ENCODE measurements at regions of chr10 and their contacts with region 1.

Region 1: GRCh38 chr10:34584164-34584563 is 230.9 kb downstream of the PARD3 start:
- DNase-seq: peak; percentile 81
- H3K4me3 Mint-ChIP-seq: peak overlapping the region; percentile 60
- H3K27ac Mint-ChIP-seq: peak overlapping the region; percentile 88
- H3K4me1 Mint-ChIP-seq: peaks cover 57% of the 10 kb centered on the region
- H3K27me3 Mint-ChIP-seq: no peaks in the 10 kb centered on the region
- CTCF ChIP-seq: no peak

Region 2: DNA sequence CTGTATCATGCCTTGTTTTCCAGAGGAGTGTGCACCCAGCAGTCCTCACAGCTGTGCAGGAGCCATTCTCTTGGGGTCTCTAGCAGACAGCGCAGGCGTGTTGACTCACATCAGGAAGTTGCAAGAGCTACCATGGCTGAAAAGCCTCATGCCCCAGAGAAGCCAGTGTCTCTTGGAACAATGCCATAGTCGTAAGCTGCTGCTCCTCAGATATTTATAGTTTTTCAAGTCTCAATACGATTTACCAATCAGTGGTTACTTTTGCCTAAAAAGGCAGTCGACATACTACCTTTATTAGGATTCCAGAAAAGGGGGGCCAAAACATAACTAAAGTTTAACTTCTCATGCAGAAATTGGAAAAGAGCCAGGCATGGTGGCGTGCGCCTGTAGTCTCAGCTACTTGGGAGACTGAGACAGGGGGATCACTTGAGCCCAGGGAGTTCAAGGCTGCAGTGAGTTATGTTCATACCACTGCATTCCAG is 176.8 kb before region 1 on chr10:
- CTCF ChIA-PET with region 1: no interaction called
- POLR2A ChIA-PET with region 1: no interaction called
- intact Hi-C with region 1: no loop called
- DNase-seq: peak; percentile 62
- H3K4me3 Mint-ChIP-seq: no peak overlapping the region
- H3K27ac Mint-ChIP-seq: no peak overlapping the region
- H3K4me1 Mint-ChIP-seq: peaks cover 20% of the 10 kb centered on the region
- H3K27me3 Mint-ChIP-seq: no peaks in the 10 kb centered on the region
- CTCF ChIP-seq: no peak

Region 3: DNA sequence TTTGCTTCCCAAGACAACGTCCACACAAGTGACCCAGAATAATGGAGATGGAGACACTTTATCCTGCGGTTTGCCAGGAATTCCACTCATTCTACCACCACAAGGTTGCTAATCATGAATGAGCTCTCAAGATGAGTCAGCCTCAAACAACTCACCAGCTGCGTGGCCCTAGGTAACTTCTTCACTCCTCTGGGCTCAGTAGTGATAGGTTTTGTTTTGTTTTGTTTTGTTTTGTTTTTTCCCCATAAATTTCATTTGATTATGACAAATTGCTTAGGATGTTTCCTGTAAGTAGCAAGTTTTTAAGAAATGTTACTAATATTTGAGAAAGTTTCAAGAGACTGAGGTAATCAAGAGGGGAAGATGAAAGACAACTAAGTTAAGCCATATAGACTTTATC is 55.8 kb before region 1 on chr10:
- CTCF ChIA-PET with region 1: no interaction called
- POLR2A ChIA-PET with region 1: no interaction called
- intact Hi-C with region 1: loop called (anchors 5 kb)
- DNase-seq: peak; percentile 94
- H3K4me3 Mint-ChIP-seq: peak overlapping the region; percentile 72
- H3K27ac Mint-ChIP-seq: peak overlapping the region; percentile 88
- H3K4me1 Mint-ChIP-seq: peaks cover 43% of the 10 kb centered on the region
- H3K27me3 Mint-ChIP-seq: no peaks in the 10 kb centered on the region
- CTCF ChIP-seq: no peak

Region 4: DNA sequence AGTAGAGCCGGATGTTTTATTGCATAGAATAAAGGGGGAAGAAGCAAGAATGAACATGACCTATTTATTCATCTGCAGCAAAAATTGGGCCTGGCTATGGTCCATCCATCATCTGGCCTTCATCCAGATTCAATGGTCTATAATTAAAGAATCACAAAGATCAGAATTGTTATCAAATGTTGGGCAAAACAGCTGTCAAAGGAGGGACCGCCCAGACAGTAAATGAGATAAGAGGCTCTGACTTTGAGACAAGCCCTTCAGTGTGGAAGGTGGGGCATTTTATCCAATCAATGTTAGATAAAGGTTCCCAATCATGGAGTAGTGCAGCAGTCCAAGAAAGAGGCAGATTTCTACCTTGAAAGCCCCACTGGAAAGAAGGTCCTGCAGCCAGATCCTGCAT is 77.4 kb after region 1 on chr10:
- CTCF ChIA-PET with region 1: no interaction called
- POLR2A ChIA-PET with region 1: no interaction called
- intact Hi-C with region 1: no loop called
- DNase-seq: no peak
- H3K4me3 Mint-ChIP-seq: no peak overlapping the region
- H3K27ac Mint-ChIP-seq: no peak overlapping the region
- H3K4me1 Mint-ChIP-seq: peaks cover 28% of the 10 kb centered on the region
- H3K27me3 Mint-ChIP-seq: no peaks in the 10 kb centered on the region
- CTCF ChIP-seq: no peak

Measured in MCF 10A (cell line).